Activated T-helper 2 cell treated with anti-CD3 and anti-CD28 coated beads, Interferon-gamma antibody, Interleukin-2, Interleukin-4, amounts not matched to agents 10 μg/mL and 5 μg/mL and 100 μg/mL, durations not matched to agents 14 hours and 24 hours and 36 hours (primary cell): ENCODE measurements at regions of chr17 and their contacts with region 1.

Region 1: DNA sequence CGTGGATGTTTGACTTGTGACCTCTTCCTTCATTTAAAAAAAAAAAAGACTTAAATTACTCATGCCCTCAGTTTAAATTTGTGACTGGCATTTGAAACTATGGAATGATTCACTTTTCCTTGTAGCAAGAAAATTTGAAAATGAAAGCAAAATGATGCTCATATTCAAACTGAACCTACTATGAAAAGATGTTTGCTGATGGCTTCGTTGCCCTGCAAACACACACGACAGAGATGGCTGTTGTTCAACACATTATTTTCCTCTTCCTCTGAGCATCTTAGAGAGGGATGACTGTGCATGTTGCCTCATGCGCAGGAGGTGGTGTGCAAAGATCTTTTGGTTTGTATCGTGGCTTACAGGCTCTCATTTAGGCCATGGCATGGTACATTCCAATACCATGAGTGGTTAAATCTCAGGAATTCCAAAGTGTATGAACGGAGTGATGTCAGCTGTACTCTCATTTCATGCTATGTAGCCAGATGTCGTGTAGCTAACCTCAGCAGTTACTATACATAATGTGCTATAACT is 164.5 kb downstream of the PRKCA start:
- DNase-seq: peak; percentile 48
- H3K4me3 Mint-ChIP-seq: peak overlapping the region; percentile 46
- H3K27ac Mint-ChIP-seq: peak overlapping the region; percentile 93
- H3K4me1 Mint-ChIP-seq: peaks cover 59% of the 10 kb centered on the region
- H3K27me3 Mint-ChIP-seq: no peaks in the 10 kb centered on the region

Region 2: GRCh38 chr17:66276328-66276937 is 190.5 kb before region 1 on chr17:
- intact Hi-C with region 1: no loop called
- DNase-seq: no peak
- H3K4me3 Mint-ChIP-seq: no peak overlapping the region
- H3K27ac Mint-ChIP-seq: no peak overlapping the region
- H3K4me1 Mint-ChIP-seq: peaks cover 11% of the 10 kb centered on the region
- H3K27me3 Mint-ChIP-seq: peaks cover 7% of the 10 kb centered on the region

Region 3: GRCh38 chr17:66364990-66365490 is 101.9 kb before region 1 on chr17:
- intact Hi-C with region 1: loop called (anchors 2 kb)
- DNase-seq: no peak
- H3K4me3 Mint-ChIP-seq: peak overlapping the region; percentile 72
- H3K27ac Mint-ChIP-seq: peak overlapping the region; percentile 94
- H3K4me1 Mint-ChIP-seq: peaks cover 84% of the 10 kb centered on the region
- H3K27me3 Mint-ChIP-seq: no peaks in the 10 kb centered on the region

Region 4: DNA sequence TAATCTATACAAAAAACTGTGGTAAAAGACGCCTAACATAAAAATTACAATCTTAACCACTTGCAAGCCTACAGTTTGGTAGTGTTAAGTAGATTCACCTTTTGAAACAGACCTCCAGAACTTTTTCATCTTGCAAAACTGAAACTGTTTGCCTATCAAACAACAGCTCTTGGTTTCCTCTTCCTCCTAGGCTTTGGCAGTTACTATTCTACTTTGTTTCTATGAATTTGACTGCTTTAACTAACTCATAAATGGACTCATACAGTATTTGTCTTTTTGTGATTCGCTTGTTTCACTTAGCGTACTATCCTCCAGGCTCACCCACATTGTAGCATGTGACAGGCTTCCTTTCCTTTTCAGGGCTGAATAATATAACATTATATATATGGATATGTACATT is 67.5 kb before region 1 on chr17:
- intact Hi-C with region 1: loop called (anchors 1 kb)
- DNase-seq: no peak
- H3K4me3 Mint-ChIP-seq: peak overlapping the region; percentile 47
- H3K27ac Mint-ChIP-seq: peak overlapping the region; percentile 86
- H3K4me1 Mint-ChIP-seq: peaks cover 80% of the 10 kb centered on the region
- H3K27me3 Mint-ChIP-seq: no peaks in the 10 kb centered on the region

Region 5: DNA sequence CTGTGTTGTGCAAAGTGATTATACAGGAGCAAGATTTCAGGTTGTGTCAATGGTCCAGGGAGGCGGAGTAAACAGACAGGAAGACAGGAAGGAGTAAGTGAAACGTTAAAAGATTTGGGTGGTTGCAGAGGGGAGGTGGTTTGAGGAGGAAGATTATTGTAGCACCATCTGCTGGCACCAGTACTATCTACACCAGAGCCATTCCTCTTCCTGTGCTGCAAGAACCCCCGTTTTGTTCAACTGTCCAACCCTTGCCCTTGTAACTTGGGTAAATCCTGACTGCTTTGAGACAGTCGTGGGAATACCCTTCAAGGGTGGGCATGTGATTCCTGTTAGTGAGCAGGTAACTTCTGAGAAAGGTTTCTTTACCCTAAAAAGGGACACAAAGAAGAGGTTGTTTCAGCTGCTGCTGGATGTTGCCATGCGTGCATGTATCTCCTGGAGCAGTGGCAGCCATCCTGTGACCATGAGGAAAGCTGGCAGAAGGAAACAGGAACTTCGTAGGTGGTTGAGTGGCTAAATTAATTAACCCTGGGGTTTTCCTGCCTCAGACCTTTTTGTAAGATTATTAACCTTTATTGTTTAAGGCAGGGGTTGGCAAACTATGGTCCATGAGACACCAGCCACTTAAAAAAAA is 40.4 kb before region 1 on chr17:
- intact Hi-C with region 1: loop called (anchors 1 kb)
- DNase-seq: peak; percentile 40
- H3K4me3 Mint-ChIP-seq: peak overlapping the region; percentile 14
- H3K27ac Mint-ChIP-seq: peak overlapping the region; percentile 62
- H3K4me1 Mint-ChIP-seq: peaks cover 70% of the 10 kb centered on the region
- H3K27me3 Mint-ChIP-seq: no peaks in the 10 kb centered on the region

Region 6: DNA sequence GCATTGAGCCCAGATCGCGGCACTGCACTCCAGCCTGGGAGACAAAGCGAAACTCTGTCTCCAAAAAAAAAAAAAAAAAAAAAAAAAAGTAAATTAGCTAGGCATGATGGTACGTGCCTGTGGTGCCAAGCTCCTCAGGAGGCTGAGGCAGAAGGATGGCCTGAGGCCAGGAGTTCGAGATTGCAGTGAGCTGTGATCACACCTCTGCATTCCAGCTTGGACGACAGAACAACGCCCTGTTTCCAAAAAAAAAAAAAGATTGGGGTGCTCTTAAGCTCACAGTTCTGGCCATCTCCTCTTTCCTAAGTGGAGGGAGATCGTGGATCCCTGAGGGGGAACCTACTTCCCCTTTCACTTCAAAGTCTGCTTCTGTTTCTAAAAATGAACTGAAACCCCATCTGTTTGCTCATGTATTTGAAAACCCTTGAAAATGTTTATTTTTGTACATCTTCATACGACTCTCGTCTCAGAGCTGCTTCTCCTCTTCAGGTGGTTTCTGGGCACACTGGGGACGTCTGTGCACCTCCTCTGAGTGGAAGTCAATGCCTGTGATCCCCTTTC is 25.7 kb before region 1 on chr17:
- intact Hi-C with region 1: no loop called
- DNase-seq: no peak
- H3K4me3 Mint-ChIP-seq: no peak overlapping the region
- H3K27ac Mint-ChIP-seq: peak overlapping the region; percentile 4
- H3K4me1 Mint-ChIP-seq: peaks cover 31% of the 10 kb centered on the region
- H3K27me3 Mint-ChIP-seq: no peaks in the 10 kb centered on the region

Region 7: DNA sequence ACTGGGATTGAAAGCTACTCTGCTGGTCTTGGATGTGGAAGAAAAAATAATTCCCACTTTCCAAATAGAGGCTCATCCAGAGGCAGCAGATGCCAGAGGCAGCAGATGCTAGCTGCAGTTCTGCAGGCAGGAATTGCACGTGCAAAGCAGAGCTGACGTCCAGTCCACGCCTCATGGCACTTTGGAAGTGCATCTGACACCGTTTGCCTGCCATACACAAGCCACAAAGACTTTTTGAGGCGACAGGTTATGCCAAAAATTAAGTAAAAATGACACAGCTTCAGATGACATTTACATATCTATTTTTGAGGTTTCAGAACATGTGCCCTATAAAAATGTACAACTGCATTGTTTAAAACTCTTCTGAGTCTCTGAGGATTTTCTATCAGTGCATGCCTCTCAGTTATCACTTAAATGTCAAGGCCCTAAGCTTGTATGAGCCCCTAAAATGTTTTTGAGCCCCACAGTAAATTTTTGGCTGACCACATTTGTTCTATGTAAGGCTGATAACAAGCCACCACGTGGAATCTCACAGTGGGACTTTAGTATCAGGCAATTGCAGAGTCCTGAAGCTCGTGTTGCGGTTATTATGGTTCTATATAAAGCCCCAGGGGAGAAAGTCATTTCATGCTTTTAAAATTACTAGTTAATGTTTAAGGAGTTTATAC is 74.7 kb after region 1 on chr17:
- intact Hi-C with region 1: loop called (anchors 1 kb)
- DNase-seq: no peak
- H3K4me3 Mint-ChIP-seq: no peak overlapping the region
- H3K27ac Mint-ChIP-seq: peak overlapping the region; percentile 60
- H3K4me1 Mint-ChIP-seq: peaks cover 45% of the 10 kb centered on the region
- H3K27me3 Mint-ChIP-seq: no peaks in the 10 kb centered on the region

Region 8: GRCh38 chr17:66633317-66633965 is 166.5 kb after region 1 on chr17:
- intact Hi-C with region 1: loop called (anchors 5 kb)
- DNase-seq: peak; percentile 41
- H3K4me3 Mint-ChIP-seq: peak overlapping the region; percentile 31
- H3K27ac Mint-ChIP-seq: peak overlapping the region; percentile 85
- H3K4me1 Mint-ChIP-seq: peaks cover 64% of the 10 kb centered on the region
- H3K27me3 Mint-ChIP-seq: no peaks in the 10 kb centered on the region